MCF 10A (cell line): ENCODE measurements at regions of chr7 and their contacts with region 1.

Region 1: DNA sequence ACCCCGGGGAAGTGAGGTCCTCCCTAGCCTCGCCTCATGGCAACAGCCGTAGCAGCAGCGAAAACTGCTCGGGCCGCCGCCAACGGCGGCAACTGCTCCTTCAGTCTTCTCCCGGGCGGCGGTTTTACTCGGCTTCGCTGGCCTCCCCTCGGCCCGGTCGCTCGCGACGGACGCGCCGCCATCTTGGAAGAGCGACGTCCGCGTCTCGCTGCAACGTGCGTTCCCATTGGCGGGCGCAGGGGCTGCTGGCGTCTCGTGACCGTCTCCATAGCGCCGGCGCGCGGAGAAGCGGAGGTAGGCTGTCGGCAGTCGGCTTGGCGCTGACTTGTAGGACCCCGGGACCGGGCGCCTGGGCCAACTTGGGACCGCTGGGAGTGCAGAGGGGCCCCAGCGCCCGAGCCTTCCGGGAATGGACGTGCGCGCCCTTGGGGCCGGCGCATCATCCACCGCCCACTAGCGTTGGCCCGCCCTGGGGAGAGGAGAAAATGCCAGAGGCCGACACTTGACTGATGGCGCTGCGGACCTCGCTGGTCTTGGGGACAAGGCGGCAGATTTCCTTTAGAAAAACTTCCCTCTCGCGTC is at the start of gene SNX13:
- DNase-seq: peak; percentile 90
- H3K4me3 Mint-ChIP-seq: peak within 1 kb of the TSS; percentile 100
- H3K27ac Mint-ChIP-seq: peak within 1 kb of the TSS; percentile 99
- H3K4me1 Mint-ChIP-seq: peaks cover 29% of the 10 kb centered on the region
- H3K27me3 Mint-ChIP-seq: no peaks in the 10 kb centered on the region
- CTCF ChIP-seq: peak; percentile 19
- total RNA-seq, gene SNX13: 38.5 and 42.0 TPM in 2 replicates

Region 2: GRCh38 chr7:17928055-17928454 is 12.3 kb before region 1 on chr7:
- CTCF ChIA-PET with region 1: interaction called, 3 read pairs
- POLR2A ChIA-PET with region 1: interaction called, 11 read pairs
- intact Hi-C with region 1: no loop called
- DNase-seq: no peak
- H3K4me3 Mint-ChIP-seq: no peak overlapping the region
- H3K27ac Mint-ChIP-seq: no peak overlapping the region
- H3K4me1 Mint-ChIP-seq: peaks cover 5% of the 10 kb centered on the region
- H3K27me3 Mint-ChIP-seq: no peaks in the 10 kb centered on the region
- CTCF ChIP-seq: no peak

Region 3: DNA sequence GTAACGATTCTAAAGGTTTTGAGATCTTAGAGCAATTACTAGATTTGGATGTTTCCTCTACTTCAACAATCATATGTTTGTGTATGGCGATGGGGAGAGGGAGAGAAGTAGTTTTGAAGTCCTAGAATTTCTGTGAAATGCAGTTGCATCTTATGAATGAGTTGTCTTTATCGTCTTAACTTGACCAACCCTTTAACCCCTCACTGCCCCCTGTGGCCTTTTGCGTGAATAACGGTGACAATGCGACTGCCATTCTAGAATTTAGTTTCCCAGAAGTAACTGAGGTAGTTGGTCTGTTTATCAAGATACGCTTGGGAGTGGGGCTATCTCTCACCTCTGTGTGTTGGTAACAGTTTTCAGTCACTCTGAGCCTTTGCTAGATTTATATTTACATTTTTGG is 759.8 kb after region 1 on chr7:
- CTCF ChIA-PET with region 1: no interaction called
- POLR2A ChIA-PET with region 1: no interaction called
- intact Hi-C with region 1: no loop called
- DNase-seq: peak; percentile 21
- H3K4me3 Mint-ChIP-seq: no peak overlapping the region
- H3K27ac Mint-ChIP-seq: no peak overlapping the region
- H3K4me1 Mint-ChIP-seq: no peaks in the 10 kb centered on the region
- H3K27me3 Mint-ChIP-seq: no peaks in the 10 kb centered on the region
- CTCF ChIP-seq: peak; percentile 30